Panc1 (cell line): ENCODE measurements at regions of chr1 and their contacts with region 1.

Region 1: DNA sequence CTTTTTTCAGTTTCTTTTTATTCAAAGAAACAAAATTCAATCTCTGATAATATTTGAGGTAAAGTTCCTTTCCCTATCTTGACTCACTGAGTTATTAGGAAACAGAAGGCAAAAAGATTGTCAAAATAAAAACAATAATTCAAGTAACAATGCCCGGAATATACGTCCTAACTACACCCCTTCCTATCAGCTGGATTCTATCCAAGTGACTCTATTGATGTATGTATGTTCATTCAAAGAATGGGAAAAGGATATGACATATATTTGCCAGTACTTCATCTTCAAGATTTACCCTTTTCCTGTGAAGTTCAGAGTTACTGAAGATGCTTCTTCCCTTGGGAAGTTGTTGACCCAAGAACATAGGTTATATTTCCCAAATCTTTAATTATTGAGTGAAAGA is 13.7 kb downstream of the SPRTN start:
- DNase-seq: no peak
- ATAC-seq: no peak
- H3K4me3 ChIP-seq: no peak overlapping the region
- H3K27ac ChIP-seq: no peak overlapping the region
- H3K4me1 ChIP-seq: no peaks in the 10 kb centered on the region
- H3K27me3 ChIP-seq: no peaks in the 10 kb centered on the region
- CTCF ChIP-seq: no peak

Region 2: DNA sequence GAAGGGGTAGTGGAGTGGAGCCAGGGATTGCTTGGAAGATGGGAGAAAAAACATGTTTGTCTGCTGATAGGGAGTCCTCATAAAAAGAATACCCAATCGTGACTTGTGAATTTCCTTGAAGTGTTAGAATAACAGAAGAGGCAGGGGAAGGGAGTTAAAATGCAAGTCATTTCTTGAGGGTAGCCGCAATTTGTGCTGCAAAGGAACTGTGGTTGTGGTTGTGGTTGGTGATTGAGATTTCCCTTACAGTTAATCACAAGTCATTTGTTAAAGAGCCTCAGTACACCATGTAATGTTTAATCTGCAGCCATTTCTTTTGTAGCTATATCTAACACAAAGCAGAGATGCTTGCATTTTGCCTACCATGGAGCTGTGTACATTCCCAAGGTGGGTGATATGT is 108.8 kb after region 1 on chr1:
- CTCF ChIA-PET with region 1: no interaction called
- POLR2A ChIA-PET with region 1: no interaction called
- in situ Hi-C with region 1: no loop called
- intact Hi-C with region 1: no loop called
- DNase-seq: no peak
- ATAC-seq: no peak
- H3K4me3 ChIP-seq: no peak overlapping the region
- H3K27ac ChIP-seq: no peak overlapping the region
- H3K4me1 ChIP-seq: no peaks in the 10 kb centered on the region
- H3K27me3 ChIP-seq: peaks cover 14% of the 10 kb centered on the region
- CTCF ChIP-seq: no peak

Region 3: GRCh38 chr1:233261206-233261605 is 1909.4 kb after region 1 on chr1:
- CTCF ChIA-PET with region 1: interaction called, 10 read pairs
- POLR2A ChIA-PET with region 1: no interaction called
- in situ Hi-C with region 1: no loop called
- intact Hi-C with region 1: no loop called
- DNase-seq: peak; percentile 15
- ATAC-seq: 0 out of 2 replicates have a peak, but pooled peaks have one; percentile 42
- H3K4me3 ChIP-seq: no peak overlapping the region
- H3K27ac ChIP-seq: 0 out of 2 replicates have a peak overlapping the region, but pooled peaks have one; percentile 23
- H3K4me1 ChIP-seq: peaks cover 4% of the 10 kb centered on the region; the same call in 1 of the 2 replicates
- H3K27me3 ChIP-seq: no peaks in the 10 kb centered on the region
- CTCF ChIP-seq: no peak